ENCODE measurements at regions of chr19 and their contacts with region 1.

Region 1: GRCh38 chr19:1026189-1027019 is at the start of gene CNN2:
- DNase-seq: peak in 1 of 2 experiments; percentile 92
- H3K4me3 ChIP-seq: peak within 1 kb of the TSS; percentile 85 to 99 (median 96)
- H3K27ac ChIP-seq: peak within 1 kb of the TSS; percentile 94
- H3K4me1 ChIP-seq: peaks cover 0 to 9% (median 4%) of the 10 kb centered on the region in 4 experiments; a peak in 5 of 7 replicates
- H3K27me3 ChIP-seq: no peaks in the 10 kb centered on the region
- CTCF ChIP-seq: no peak
- EP300 ChIP-seq: peak in 1 of 2 experiments; percentile 83; a peak in 1 of 3 replicates
- POLR2A ChIP-seq: peak; percentile 81 to 88
- RAD21 ChIP-seq: no peak
- total RNA-seq, gene CNN2: 522 and 551 TPM in 2 replicates

Region 2: DNA sequence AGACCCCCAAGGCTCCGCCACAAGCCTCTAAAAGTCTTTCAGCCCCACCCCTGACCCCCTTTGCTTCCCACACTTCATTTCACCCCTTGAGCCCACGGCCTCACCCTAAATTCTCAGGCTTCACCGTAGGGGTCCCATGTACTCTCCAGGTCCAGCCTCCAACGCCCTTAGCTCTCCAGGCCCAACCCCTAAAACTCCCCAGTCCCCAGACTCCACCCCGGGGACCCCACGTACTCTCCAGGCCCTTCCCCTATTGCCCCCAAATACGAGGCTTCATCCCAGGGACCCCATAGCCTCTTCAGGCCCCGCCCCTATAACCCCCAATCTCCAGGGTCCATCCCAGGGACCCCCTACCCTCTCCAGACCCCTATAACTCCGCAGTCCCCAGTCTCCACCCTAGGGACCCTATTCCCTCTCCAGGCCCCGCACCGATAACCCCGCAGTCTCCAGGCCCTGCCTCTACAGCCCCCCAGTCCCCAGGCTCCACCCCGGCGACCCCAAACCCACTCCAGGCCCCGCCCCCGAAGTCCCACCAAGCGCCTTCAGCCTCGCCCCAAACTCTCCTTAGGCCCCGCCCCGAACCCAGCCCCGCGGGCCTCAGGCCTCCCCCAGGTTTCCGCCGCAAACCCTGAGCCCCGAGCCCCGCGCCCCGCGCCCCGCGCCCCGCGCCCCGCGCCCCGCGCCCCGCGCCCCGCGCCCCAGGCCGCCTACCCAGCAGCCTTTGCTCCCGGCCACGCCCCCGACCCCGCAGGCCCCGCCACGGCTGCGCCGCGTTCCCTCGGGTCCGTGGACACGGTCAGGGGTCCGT is 134.0 kb before region 1 on chr19:
- CTCF ChIA-PET with region 1: no interaction called
- POLR2A ChIA-PET with region 1: interaction called, 13 read pairs
- DNase-seq: no peak
- H3K4me3 ChIP-seq: peak overlapping the region; percentile 75 to 91 (median 78)
- H3K27ac ChIP-seq: peak overlapping the region; percentile 89
- H3K4me1 ChIP-seq: peaks cover 0 to 5% (median under 1%) of the 10 kb centered on the region in 4 experiments; a peak in 3 of 7 replicates
- H3K27me3 ChIP-seq: no peaks in the 10 kb centered on the region
- CTCF ChIP-seq: no peak
- EP300 ChIP-seq: no peak
- POLR2A ChIP-seq: no peak
- RAD21 ChIP-seq: no peak

Region 3: DNA sequence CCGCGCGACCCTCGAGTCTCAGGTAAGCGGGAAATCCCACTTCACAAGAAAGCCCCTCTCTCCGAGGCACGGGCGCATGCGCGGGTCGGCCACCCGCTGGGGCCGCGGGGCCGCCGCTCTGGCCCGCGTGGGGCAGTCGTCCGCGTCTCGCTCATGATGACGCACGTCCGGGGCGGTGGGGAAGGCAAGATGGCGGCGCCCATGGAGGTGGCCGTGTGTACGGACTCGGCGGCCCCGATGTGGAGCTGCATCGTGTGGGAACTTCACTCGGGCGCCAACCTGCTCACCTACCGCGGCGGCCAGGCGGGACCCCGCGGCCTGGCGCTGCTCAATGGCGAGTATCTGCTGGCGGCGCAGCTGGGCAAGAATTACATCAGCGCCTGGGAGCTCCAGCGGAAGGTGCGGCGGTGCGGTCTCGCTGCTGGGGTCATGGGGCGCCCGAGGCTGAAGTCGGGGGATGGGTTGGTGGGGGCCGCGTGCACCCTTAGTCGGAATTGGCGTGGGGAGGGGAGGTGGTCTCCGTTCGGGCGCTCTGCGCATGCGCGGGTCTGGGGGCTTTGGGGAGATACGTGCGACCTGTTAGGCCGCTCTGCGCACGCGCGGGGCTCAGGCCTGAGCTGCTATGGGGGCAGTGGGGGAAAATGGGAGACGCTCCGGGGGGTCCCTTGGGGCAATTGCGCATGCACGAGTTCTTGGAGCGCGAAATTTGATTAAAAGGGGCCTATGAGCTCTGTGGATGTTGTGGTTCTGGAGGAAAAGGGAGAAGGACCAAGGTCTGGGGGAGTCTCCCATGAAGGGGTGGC is 42.0 kb before region 1 on chr19 and contains the start of gene WDR18:
- CTCF ChIA-PET with region 1: no interaction called
- POLR2A ChIA-PET with region 1: interaction called, 23 read pairs
- DNase-seq: peak; percentile 76 to 95
- H3K4me3 ChIP-seq: peak within 1 kb of the TSS; percentile 87 to 99 (median 92)
- H3K27ac ChIP-seq: peak within 1 kb of the TSS; percentile 96
- H3K4me1 ChIP-seq: peaks cover 0 to 14% (median 9%) of the 10 kb centered on the region in 4 experiments; a peak in 5 of 7 replicates
- H3K27me3 ChIP-seq: no peaks in the 10 kb centered on the region
- CTCF ChIP-seq: no peak
- EP300 ChIP-seq: no peak
- POLR2A ChIP-seq: peak; percentile 66 to 76
- RAD21 ChIP-seq: no peak
- total RNA-seq, gene WDR18: 87.7 and 90.1 TPM in 2 replicates

Region 4: GRCh38 chr19:1039646-1040475 is 13.5 kb after region 1 on chr19 and contains the start of gene ABCA7:
- CTCF ChIA-PET with region 1: interaction called, 18 read pairs
- POLR2A ChIA-PET with region 1: interaction called, 509 read pairs
- DNase-seq: peak; percentile 98 to 100
- H3K4me3 ChIP-seq: peak within 1 kb of the TSS; percentile 53 to 76 (median 64)
- H3K27ac ChIP-seq: 0 out of 2 replicates have a peak within 1 kb of the TSS, but pooled peaks have one; percentile 9
- H3K4me1 ChIP-seq: peaks cover 0 to 10% (median 9%) of the 10 kb centered on the region in 4 experiments; a peak in 6 of 7 replicates
- H3K27me3 ChIP-seq: no peaks in the 10 kb centered on the region
- CTCF ChIP-seq: no peak
- EP300 ChIP-seq: no peak
- POLR2A ChIP-seq: peak in 1 of 2 experiments; percentile 16; a peak in 2 of 3 replicates
- RAD21 ChIP-seq: peak in 1 of 2 experiments; percentile 14; a peak in 1 of 4 replicates
- total RNA-seq, gene ABCA7: 25.6 and 29.7 TPM in 2 replicates

Region 5: DNA sequence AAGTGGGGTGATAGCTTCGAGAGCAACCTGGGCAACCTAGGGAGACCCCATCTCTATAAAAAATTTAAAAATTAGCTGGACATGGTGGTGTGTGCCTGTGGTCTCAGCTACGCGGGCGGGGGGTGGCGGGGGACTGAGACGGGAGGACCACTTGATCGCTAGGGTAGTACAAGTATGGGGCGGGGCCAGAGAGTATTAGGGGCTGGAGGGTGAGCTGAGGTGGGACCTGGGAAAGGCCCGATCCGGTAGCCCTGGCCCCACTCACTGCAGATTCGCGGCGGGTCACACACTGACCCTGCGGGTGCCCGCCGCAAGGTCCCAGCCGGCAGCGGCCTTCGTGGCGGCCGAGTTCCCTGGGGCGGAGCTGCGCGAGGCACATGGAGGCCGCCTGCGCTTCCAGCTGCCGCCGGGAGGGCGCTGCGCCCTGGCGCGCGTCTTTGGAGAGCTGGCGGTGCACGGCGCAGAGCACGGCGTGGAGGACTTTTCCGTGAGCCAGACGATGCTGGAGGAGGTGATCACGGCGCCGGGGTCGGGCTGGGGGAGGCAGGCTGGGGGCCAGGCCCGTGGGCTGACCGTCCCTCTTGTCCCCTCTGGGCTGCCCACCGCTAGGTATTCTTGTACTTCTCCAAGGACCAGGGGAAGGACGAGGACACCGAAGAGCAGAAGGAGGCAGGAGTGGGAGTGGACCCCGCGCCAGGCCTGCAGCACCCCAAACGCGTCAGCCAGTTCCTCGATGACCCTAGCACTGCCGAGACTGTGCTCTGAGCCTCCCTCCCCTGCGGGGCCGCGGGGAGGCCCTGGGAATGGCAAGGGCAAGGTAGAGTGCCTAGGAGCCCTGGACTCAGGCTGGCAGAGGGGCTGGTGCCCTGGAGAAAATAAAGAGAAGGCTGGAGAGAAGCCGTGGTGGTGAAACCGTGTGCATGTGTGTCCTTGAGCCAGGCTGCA is 38.5 kb after region 1 on chr19:
- CTCF ChIA-PET with region 1: interaction called, 7 read pairs
- POLR2A ChIA-PET with region 1: interaction called, 97 read pairs
- DNase-seq: peak in 1 of 2 experiments; percentile 88
- H3K4me3 ChIP-seq: peak overlapping the region in 2 of 4 experiments; percentile 9 to 54; a peak in 3 of 8 replicates
- H3K27ac ChIP-seq: no peak overlapping the region
- H3K4me1 ChIP-seq: peaks cover 0 to 27% (median 19%) of the 10 kb centered on the region in 4 experiments; a peak in 6 of 7 replicates
- H3K27me3 ChIP-seq: peaks cover 0 to 26% (median 18%) of the 10 kb centered on the region in 4 experiments; a peak in 5 of 7 replicates
- CTCF ChIP-seq: peak; percentile 65 to 86 (median 84)
- EP300 ChIP-seq: no peak
- POLR2A ChIP-seq: no peak
- RAD21 ChIP-seq: peak; percentile 38 to 60; a peak in 3 of 4 replicates

Region 6: GRCh38 chr19:1082172-1082927 is 55.9 kb after region 1 on chr19:
- CTCF ChIA-PET with region 1: interaction called, 4 read pairs
- POLR2A ChIA-PET with region 1: interaction called, 58 read pairs
- DNase-seq: peak; percentile 95 to 99
- H3K4me3 ChIP-seq: peak overlapping the region; percentile 12 to 50 (median 32); a peak in 5 of 8 replicates
- H3K27ac ChIP-seq: no peak overlapping the region
- H3K4me1 ChIP-seq: peaks cover 0 to 7% (median 0%) of the 10 kb centered on the region in 4 experiments; a peak in 4 of 7 replicates
- H3K27me3 ChIP-seq: no peaks in the 10 kb centered on the region
- CTCF ChIP-seq: no peak
- EP300 ChIP-seq: no peak
- POLR2A ChIP-seq: no peak
- RAD21 ChIP-seq: no peak

Region 7: DNA sequence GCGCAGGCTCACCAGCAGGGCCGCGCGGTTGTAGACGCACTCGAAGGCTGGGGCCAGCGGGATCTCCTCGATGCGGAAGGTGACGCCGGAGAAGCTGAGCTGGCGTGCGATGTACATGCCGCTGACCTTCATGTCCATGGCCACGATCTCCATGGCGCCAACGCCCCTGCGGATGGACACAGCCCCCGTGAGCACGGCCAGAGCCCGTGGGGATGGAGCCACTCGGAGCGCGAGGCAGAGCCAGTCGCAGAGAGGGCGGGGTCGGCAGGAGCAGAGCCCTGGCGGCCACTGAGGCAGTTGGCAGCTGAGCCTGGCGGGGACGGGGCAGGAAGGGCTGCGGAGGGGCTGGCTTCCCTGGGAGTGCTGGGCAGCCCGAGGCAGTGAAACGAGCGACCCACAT is 92.6 kb after region 1 on chr19:
- CTCF ChIA-PET with region 1: no interaction called
- POLR2A ChIA-PET with region 1: no interaction called
- DNase-seq: no peak
- H3K4me3 ChIP-seq: no peak overlapping the region
- H3K27ac ChIP-seq: no peak overlapping the region
- H3K4me1 ChIP-seq: peaks cover 0 to 4% (median 2%) of the 10 kb centered on the region in 4 experiments; a peak in 3 of 7 replicates
- H3K27me3 ChIP-seq: no peaks in the 10 kb centered on the region
- CTCF ChIP-seq: no peak
- EP300 ChIP-seq: no peak
- POLR2A ChIP-seq: no peak
- RAD21 ChIP-seq: no peak

Region 8: GRCh38 chr19:1141944-1142343 is 115.5 kb after region 1 on chr19:
- CTCF ChIA-PET with region 1: no interaction called
- POLR2A ChIA-PET with region 1: no interaction called
- DNase-seq: no peak
- H3K4me3 ChIP-seq: no peak overlapping the region
- H3K27ac ChIP-seq: no peak overlapping the region
- H3K4me1 ChIP-seq: peaks cover 0 to 9% (median 5%) of the 10 kb centered on the region in 4 experiments; a peak in 4 of 7 replicates
- H3K27me3 ChIP-seq: no peaks in the 10 kb centered on the region
- CTCF ChIP-seq: no peak
- EP300 ChIP-seq: no peak
- POLR2A ChIP-seq: no peak
- RAD21 ChIP-seq: no peak

Region 9: GRCh38 chr19:1241417-1242095 is 215.2 kb after region 1 on chr19 and contains the start of gene ATP5F1D:
- CTCF ChIA-PET with region 1: no interaction called
- POLR2A ChIA-PET with region 1: interaction called, 15 read pairs
- DNase-seq: peak in 1 of 2 experiments; percentile 94
- H3K4me3 ChIP-seq: peak within 1 kb of the TSS; percentile 65 to 95 (median 67)
- H3K27ac ChIP-seq: no peak within 1 kb of the TSS
- H3K4me1 ChIP-seq: peaks cover 0 to 26% (median 10%) of the 10 kb centered on the region in 4 experiments; a peak in 5 of 7 replicates
- H3K27me3 ChIP-seq: no peaks in the 10 kb centered on the region
- CTCF ChIP-seq: no peak
- EP300 ChIP-seq: no peak
- POLR2A ChIP-seq: no peak
- RAD21 ChIP-seq: no peak
- total RNA-seq, gene ATP5F1D: 174 and 182 TPM in 2 replicates